ENCODE measurements at regions of chr7 and their contacts with region 1.

Region 1: GRCh38 chr7:37901236-37901827 is 15.3 kb downstream of the SFRP4 start:
- DNase-seq: no peak
- ATAC-seq: peak in 3 of 4 donors; percentile 42 to 69 (median 52)
- H3K4me3 ChIP-seq: no peak overlapping the region
- H3K27ac ChIP-seq: no peak overlapping the region
- H3K4me1 ChIP-seq: peaks cover 0 to 17% (median 3%) of the 10 kb centered on the region in 12 donors
- H3K27me3 ChIP-seq: no peaks in the 10 kb centered on the region
- CTCF ChIP-seq: peak; percentile 32 to 69 (median 50)
- POLR2A ChIP-seq: no peak

Region 2: DNA sequence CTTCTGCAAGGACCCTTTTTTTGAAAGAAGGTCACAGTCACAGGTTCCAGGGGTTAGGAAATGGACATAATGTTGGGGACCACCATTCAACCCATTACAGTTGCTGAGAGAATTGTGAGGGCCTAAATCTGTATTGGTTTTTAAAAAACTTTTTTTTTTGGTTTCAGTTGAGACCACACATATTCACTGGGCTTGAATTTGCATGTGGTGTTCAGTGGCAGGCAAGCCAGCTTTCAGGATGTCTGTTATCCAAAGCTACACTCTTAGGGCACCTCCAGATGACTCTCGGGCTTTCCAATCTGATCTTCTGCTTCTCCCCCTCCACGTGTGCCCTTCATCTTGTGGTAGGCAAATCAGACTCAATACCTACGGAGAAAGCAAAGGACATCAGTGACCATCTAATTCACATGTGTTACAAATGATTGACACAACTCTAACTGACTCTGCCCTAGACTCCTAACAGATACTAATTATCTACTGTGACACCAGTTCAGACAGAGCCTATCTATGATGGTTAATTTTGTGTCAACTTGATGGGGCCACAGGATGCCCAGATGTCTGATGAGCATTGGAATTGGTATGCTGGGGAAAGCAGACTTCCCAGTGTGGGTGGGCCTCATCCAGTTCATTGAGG is 359.4 kb before region 1 on chr7:
- intact Hi-C with region 1: no loop called
- DNase-seq: no peak
- ATAC-seq: no peak
- H3K4me3 ChIP-seq: no peak overlapping the region
- H3K27ac ChIP-seq: no peak overlapping the region
- H3K4me1 ChIP-seq: no peaks in the 10 kb centered on the region
- H3K27me3 ChIP-seq: no peaks in the 10 kb centered on the region
- CTCF ChIP-seq: no peak
- POLR2A ChIP-seq: no peak

Region 3: DNA sequence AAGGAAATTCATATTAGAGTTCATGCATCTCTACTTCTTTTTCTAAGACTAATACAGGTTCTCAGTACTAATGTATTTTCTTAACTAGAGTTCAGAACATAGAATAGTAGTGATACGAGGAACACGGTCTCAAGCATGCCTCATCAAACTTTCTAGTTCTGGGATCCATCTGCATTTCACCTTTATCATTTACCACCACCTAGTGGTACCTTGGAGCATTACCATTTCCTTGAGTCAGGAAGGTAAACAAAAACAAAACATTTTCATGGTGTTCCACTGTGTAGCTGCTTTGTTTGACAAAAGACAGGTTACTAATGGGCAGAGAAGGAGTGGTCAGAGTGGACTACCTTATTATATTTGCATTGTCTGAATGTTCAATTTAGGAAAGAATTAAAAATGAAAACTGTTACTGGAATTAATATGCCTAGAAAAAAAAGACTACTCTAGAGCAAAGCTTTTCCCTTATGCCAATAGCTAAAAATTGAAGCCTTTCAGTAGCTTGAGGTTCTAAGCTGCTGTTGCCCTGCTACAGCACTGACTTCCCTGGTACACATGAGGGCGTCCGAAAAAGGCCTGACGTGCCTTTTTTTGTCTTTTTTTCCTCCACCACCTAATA is 321.3 kb after region 1 on chr7:
- intact Hi-C with region 1: loop called in 8 of 10 experiments (anchors 2 to 5 kb)
- DNase-seq: no peak
- ATAC-seq: peak; percentile 68 to 81 (median 70)
- H3K4me3 ChIP-seq: no peak overlapping the region
- H3K27ac ChIP-seq: peak overlapping the region in 1 of 12 donors; percentile 11
- H3K4me1 ChIP-seq: peaks cover 0 to 10% (median 0%) of the 10 kb centered on the region in 12 donors
- H3K27me3 ChIP-seq: no peaks in the 10 kb centered on the region
- CTCF ChIP-seq: peak; percentile 83 to 95 (median 89)
- POLR2A ChIP-seq: no peak

Region 4: DNA sequence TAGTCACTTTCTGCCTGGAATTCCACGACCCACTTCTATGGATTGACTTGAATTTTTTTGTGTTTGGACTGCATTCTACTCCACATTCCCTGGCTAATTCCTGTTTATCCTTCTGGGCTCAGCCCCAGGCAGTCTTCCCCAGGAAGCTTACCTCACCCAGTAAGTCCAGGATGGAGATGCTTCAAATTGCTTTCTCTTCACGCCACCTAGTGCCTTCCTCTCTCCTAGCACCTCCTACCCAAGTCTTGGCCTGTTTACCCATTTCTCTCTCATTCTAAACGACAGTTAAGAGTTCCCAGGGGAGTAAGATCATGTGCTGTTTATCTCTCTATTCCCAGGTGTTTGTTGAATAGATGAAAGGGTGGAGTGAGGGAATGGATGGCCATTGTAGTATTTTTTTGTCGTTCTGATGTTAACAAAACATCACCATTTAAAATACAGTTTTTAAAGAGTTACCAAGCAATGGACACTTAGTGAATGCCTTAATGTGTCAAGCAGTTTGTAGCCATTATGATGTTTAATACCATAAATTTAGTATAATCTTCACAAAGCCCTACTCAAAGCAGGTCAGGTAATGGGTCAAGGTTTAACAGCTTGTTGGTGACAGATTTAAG is 417.6 kb after region 1 on chr7:
- intact Hi-C with region 1: loop called in 3 of 10 experiments (anchors 5 to 10 kb)
- DNase-seq: peak in 1 of 5 donors; percentile 34
- ATAC-seq: peak; percentile 41 to 92 (median 81)
- H3K4me3 ChIP-seq: no peak overlapping the region
- H3K27ac ChIP-seq: peak overlapping the region in 2 of 12 donors; percentile 9 to 37
- H3K4me1 ChIP-seq: peaks cover 0 to 21% (median 0%) of the 10 kb centered on the region in 12 donors
- H3K27me3 ChIP-seq: no peaks in the 10 kb centered on the region
- CTCF ChIP-seq: peak; percentile 23 to 59 (median 51)
- POLR2A ChIP-seq: no peak